ENCODE measurements at regions of chr14 and their contacts with region 1.

Region 1: GRCh38 chr14:23379366-23380196 is 2.7 kb downstream of the CMTM5 start:
- DNase-seq: no peak
- H3K4me3 ChIP-seq: no peak overlapping the region
- H3K27ac ChIP-seq: no peak overlapping the region
- H3K27me3 ChIP-seq: peaks cover 46% of the 10 kb centered on the region
- CTCF ChIP-seq: peak; percentile 97

Region 2: GRCh38 chr14:23320774-23321571 is 58.6 kb before region 1 on chr14 and contains the start of gene PABPN1:
- CTCF ChIA-PET with region 1: interaction called, 138 read pairs
- POLR2A ChIA-PET with region 1: interaction called, 9 read pairs
- DNase-seq: peak; percentile 99
- H3K4me3 ChIP-seq: peak within 1 kb of the TSS; percentile 78
- H3K27ac ChIP-seq: peak within 1 kb of the TSS; percentile 93
- H3K27me3 ChIP-seq: no peaks in the 10 kb centered on the region
- CTCF ChIP-seq: no peak
- polyA plus RNA-seq, gene PABPN1: 174 and 182 TPM in 2 replicates

Region 3: DNA sequence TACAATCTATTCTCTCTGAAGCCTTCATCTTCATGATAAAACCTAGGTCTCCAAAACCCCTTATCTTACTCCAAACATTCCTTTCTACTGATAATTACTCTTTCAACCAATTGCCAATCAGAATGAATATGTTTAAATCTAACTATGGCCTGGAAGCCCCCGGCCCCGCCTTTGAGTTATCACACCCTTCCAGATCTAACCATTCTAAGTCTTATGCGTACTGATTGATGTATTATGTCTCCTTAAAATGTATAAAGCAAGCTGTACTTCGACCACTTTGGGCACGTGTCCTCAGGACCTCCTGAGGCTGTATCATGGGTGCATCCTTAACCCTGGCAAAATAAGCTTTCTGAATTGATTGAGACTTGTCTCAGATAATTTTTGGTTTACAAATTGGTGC is 44.0 kb before region 1 on chr14:
- CTCF ChIA-PET with region 1: interaction called, 26 read pairs
- POLR2A ChIA-PET with region 1: no interaction called
- DNase-seq: no peak
- H3K4me3 ChIP-seq: no peak overlapping the region
- H3K27ac ChIP-seq: no peak overlapping the region
- H3K27me3 ChIP-seq: peaks cover 2% of the 10 kb centered on the region
- CTCF ChIP-seq: no peak

Region 4: DNA sequence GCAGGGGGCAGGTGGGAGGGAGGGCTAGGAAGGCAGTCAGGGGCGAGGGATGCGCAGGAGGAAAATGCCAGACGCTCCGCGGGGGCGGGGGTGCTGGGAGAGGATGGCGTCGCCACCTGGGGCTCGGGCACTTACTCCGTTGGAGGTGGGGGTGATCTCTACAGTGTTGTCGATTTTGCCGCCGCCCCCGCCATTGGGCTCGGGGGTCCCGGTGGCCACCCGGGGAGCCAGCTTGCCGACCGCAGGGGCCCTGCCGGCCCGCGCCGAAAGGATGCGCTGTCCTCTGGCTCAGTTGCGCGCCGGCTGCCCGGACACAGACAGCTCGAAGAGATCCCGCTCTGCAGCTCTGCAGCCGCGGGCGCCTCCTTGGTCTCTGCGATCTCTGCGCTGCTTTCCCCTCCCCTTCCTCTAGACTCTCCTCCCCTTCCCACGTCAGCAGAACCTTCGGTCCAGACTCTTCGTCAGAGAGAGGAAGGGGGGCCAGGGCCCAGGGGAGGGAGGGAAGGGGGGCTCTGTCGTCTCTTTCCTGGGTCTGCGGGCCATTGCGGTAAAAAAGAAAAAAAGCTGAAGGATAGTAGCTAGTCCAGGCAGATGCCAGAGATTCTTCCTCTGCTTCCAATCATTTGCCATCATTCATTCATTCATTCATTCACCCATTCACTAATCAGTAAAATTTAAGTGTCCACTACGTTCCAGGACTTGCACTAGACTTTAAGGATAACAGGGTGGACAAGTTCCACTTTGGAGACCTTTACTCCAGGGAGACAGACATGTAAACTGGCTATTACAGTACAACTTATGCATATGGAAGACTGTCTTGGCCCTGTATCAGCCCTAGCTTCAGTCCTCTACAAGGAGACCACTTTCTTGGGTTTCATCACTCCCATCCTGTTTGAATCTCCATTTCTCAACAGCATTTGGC is 26.8 kb before region 1 on chr14 and contains the start of gene SLC22A17:
- CTCF ChIA-PET with region 1: interaction called, 12 read pairs
- POLR2A ChIA-PET with region 1: interaction called, 5 read pairs
- DNase-seq: peak; percentile 81
- H3K4me3 ChIP-seq: peak within 1 kb of the TSS; percentile 86
- H3K27ac ChIP-seq: peak within 1 kb of the TSS; percentile 70
- H3K27me3 ChIP-seq: no peaks in the 10 kb centered on the region
- CTCF ChIP-seq: peak; percentile 12
- polyA plus RNA-seq, gene SLC22A17: 17.4 and 27.0 TPM in 2 replicates

Region 5: GRCh38 chr14:23396126-23396525 is 16.5 kb after region 1 on chr14:
- CTCF ChIA-PET with region 1: interaction called, 13 read pairs
- POLR2A ChIA-PET with region 1: no interaction called
- DNase-seq: no peak
- H3K4me3 ChIP-seq: no peak overlapping the region
- H3K27ac ChIP-seq: no peak overlapping the region
- H3K27me3 ChIP-seq: peaks cover 13% of the 10 kb centered on the region
- CTCF ChIP-seq: no peak

Region 6: GRCh38 chr14:23481362-23481970 is 101.9 kb after region 1 on chr14:
- CTCF ChIA-PET with region 1: no interaction called
- POLR2A ChIA-PET with region 1: no interaction called
- DNase-seq: no peak
- H3K4me3 ChIP-seq: no peak overlapping the region
- H3K27ac ChIP-seq: no peak overlapping the region
- H3K27me3 ChIP-seq: no peaks in the 10 kb centered on the region
- CTCF ChIP-seq: no peak